ENCODE measurements at regions of chr10 and their contacts with region 1.

Region 1: GRCh38 chr10:101818119-101818871 is at the start of gene OGA:
- DNase-seq: peak; percentile 99
- H3K4me3 Mint-ChIP-seq: peak within 1 kb of the TSS; percentile 96
- H3K27ac Mint-ChIP-seq: peak within 1 kb of the TSS; percentile 96
- H3K4me1 Mint-ChIP-seq: peaks cover 41% of the 10 kb centered on the region
- H3K27me3 Mint-ChIP-seq: no peaks in the 10 kb centered on the region
- total RNA-seq, gene OGA: 142 to 145 TPM

Region 2: DNA sequence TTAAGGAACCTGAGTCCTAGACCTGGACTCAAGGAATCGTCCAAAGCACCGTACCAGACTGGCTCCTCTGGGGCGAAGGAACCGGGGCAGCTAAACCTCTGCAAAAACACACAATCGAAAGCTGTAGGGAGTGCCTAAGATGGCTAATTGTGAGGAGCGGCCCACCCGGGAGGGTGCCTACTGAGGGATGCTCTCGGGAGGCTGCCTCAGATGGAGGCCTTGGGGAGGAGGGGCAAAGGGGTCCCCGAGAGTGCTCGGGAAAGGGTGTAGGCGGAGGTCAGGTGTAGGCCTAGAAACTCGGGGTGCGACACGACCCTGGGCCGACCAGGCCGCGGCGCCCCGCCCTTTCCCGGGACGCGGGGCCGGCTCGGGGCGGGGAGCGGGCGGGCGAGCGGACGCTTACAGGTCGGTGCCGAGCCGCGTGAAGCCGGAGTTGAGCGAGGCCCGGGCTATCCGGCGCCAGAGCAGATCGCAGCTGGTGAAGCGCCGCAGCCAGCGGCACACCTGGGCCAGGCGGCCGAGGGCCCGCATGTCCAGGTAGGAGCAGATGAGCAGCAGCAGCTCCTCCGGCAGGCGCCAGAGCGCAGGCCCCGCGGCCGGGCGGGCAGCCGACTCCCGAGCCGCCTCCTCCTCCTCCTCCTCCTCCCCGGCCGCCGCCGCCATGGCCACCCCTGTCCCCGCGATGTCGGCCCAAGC is 124.2 kb before region 1 on chr10:
- CTCF ChIA-PET with region 1: no interaction called
- POLR2A ChIA-PET with region 1: interaction called, 16 read pairs
- DNase-seq: peak; percentile 74
- H3K4me3 Mint-ChIP-seq: peak overlapping the region; percentile 97
- H3K27ac Mint-ChIP-seq: peak overlapping the region; percentile 97
- H3K4me1 Mint-ChIP-seq: peaks cover 35% of the 10 kb centered on the region
- H3K27me3 Mint-ChIP-seq: no peaks in the 10 kb centered on the region

Region 3: DNA sequence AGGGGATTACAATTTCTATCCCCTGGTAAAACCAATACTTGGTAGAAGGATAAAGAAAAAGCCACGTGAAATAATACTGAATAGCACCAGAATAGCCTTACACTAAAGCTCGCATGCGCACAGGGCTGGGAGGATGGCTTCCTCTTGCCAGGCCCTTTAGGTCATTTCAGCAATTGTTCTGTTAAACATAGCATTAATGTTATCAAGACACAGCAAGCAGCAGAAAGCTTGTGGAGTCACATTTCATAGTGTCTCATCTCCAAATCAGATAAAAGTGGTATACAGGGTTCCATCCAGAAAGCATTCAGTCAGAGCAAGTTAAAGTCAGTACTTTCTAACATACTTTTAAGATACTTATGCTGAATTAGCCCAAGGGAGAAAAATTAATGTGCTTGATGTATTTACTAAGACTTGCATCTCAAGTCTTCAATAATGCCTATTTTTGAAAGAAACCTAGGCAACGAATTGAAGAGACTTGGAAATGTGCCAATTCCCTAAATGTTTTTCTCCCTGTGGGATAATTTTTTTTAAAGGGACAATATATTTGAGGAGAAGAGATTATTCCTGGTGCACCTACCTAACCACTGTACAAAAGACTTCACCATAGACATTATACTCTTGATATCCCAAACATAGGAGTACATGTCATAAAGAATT is 20.8 kb before region 1 on chr10:
- CTCF ChIA-PET with region 1: no interaction called
- POLR2A ChIA-PET with region 1: interaction called, 31 read pairs
- DNase-seq: no peak
- H3K4me3 Mint-ChIP-seq: no peak overlapping the region
- H3K27ac Mint-ChIP-seq: no peak overlapping the region
- H3K4me1 Mint-ChIP-seq: peaks cover 9% of the 10 kb centered on the region
- H3K27me3 Mint-ChIP-seq: no peaks in the 10 kb centered on the region

Region 4: GRCh38 chr10:101830322-101831168 is 12.2 kb after region 1 on chr10:
- CTCF ChIA-PET with region 1: interaction called, 32 read pairs
- POLR2A ChIA-PET with region 1: interaction called, 173 read pairs
- DNase-seq: peak; percentile 90
- H3K4me3 Mint-ChIP-seq: peak overlapping the region; percentile 76
- H3K27ac Mint-ChIP-seq: peak overlapping the region; percentile 87
- H3K4me1 Mint-ChIP-seq: peaks cover 56% of the 10 kb centered on the region
- H3K27me3 Mint-ChIP-seq: no peaks in the 10 kb centered on the region

Region 5: GRCh38 chr10:102114861-102115618 is 296.7 kb after region 1 on chr10:
- CTCF ChIA-PET with region 1: no interaction called
- POLR2A ChIA-PET with region 1: interaction called, 24 read pairs
- DNase-seq: peak; percentile 91
- H3K4me3 Mint-ChIP-seq: peak overlapping the region; percentile 76
- H3K27ac Mint-ChIP-seq: peak overlapping the region; percentile 91
- H3K4me1 Mint-ChIP-seq: peaks cover 63% of the 10 kb centered on the region
- H3K27me3 Mint-ChIP-seq: no peaks in the 10 kb centered on the region